Activated CD4-positive, alpha-beta T cell treated with anti-CD3 and anti-CD28 coated beads, Interleukin-2, amount 10 ng/mL, durations not matched to agents 24 days and 14 days (primary cell): ENCODE measurements at regions of chr22 and their contacts with region 1.

Region 1: GRCh38 chr22:39839917-39840510 is 53.5 kb downstream of the ENTHD1 start:
- DNase-seq: peak; percentile 76
- H3K4me3 Mint-ChIP-seq: no peak overlapping the region
- H3K27ac Mint-ChIP-seq: peak overlapping the region; percentile 4
- H3K4me1 Mint-ChIP-seq: peaks cover 14% of the 10 kb centered on the region
- H3K27me3 Mint-ChIP-seq: peaks cover 13% of the 10 kb centered on the region

Region 2: DNA sequence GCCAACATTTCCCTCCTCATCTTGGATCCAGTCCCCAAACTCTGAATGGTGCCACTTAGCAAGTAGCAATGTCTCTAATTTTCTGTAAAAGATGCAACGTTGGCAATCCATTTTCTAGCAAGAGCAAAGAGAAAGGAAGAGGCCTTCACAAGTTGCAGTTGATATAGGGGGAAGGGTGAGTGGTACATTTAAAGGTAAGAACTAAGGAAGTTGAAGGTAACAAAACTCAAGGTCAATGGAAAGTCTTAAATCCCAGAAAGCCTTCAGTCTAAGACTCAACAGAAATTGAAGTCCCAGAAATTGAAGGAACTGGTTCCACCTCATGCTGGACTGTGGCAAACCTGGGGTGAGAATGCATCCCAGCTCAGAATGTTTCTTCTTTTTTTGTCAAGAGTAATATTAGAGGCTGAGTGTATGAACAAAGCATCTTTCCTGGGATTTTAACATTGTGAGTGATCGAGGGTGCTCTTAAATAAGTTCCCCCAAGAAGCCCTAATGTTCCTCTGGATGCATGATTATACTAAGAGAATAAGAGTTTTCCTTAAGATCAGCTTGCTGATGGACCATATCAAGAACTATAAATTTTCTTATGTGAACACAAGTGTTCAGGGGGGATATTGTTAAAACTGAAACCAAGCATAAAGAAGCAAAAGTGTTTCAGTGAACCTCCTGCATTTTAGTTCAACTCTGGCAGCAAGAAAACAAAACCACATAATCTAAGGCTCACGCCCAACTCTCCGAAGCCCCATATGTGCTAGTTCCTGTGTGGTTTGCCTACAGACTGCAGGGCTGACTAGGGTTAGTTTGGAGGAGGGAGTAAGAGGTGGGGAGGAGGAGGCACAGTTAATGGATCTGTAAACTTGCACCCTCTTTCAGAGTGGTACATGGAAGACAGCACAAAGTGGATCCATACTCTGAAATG is 60.6 kb after region 1 on chr22 and contains the start of gene GRAP2:
- intact Hi-C with region 1: loop called (anchors 2 kb)
- DNase-seq: peak; percentile 93
- H3K4me3 Mint-ChIP-seq: peak within 1 kb of the TSS; percentile 84
- H3K27ac Mint-ChIP-seq: peak within 1 kb of the TSS; percentile 82
- H3K4me1 Mint-ChIP-seq: peaks cover 24% of the 10 kb centered on the region
- H3K27me3 Mint-ChIP-seq: no peaks in the 10 kb centered on the region
- total RNA-seq, gene GRAP2: 34.4 and 38.4 TPM in 2 replicates